ENCODE measurements at regions of chr6 and their contacts with region 1.

Region 1: DNA sequence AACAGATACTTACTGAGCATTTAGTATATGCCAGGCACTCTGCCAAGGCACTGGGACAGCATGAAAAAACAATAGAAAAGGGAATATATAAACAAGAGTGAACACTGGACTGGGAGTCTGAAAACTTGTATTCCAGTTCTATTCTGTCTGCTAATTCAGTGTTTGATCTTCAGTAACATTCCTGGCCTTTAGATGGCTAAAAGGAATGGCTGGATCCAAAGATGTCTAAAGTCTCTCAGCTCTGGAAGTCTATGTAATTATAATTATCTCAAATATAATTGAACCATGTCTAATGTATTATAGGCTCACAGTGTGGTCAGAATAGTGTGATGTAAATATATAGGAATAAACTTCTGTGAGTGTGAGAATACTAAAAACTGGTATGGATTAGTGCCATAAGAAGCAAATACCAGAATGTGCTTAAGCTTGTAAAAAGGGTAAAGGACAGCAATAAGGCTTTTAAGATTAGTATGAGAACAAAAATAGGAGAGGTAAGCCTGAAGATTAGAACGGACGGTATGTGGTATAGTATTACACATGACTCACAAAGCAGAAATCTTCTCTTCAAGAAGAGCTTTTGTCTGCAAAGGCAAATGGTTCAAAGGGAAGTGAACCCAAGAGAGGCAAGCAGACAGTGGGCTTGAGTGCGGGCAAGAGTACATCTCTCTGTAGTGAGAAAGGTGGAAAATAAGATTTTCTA is 68.5 kb downstream of the TMEM200A start:
- DNase-seq: no peak
- ATAC-seq: no peak
- H3K4me3 ChIP-seq: no peak overlapping the region
- H3K27ac ChIP-seq: no peak overlapping the region
- H3K4me1 ChIP-seq: no peaks in the 10 kb centered on the region
- H3K27me3 ChIP-seq: no peaks in the 10 kb centered on the region
- CTCF ChIP-seq: no peak
- EP300 ChIP-seq: no peak
- POLR2A ChIP-seq: no peak
- RAD21 ChIP-seq: no peak

Region 2: DNA sequence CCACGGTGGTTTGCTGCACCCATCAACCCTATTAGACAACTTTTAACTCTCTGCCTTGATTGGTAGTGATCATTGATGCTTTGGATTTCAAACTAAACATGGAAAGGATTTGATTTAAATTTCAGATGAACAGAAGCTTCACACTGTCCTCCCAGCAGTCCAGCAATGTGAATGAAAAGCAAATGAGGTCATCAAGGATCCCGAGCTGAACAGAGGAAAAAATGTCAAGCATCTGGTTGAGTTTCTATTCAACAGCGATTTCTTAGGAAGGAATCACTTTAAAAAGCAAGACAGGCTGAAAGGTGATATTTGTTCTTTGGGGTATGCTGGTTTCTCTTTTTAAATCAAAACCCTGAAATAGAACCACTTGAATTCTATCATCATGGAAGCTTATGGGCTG is 201.0 kb before region 1 on chr6:
- CTCF ChIA-PET with region 1: no interaction called
- POLR2A ChIA-PET with region 1: no interaction called
- in situ Hi-C with region 1: no loop called
- intact Hi-C with region 1: loop called (anchors 10 kb)
- DNase-seq: no peak
- ATAC-seq: no peak
- H3K4me3 ChIP-seq: no peak overlapping the region
- H3K27ac ChIP-seq: no peak overlapping the region
- H3K4me1 ChIP-seq: no peaks in the 10 kb centered on the region
- H3K27me3 ChIP-seq: peaks cover 0 to 2% of the 10 kb centered on the region in 2 experiments; a peak in 2 of 5 replicates
- CTCF ChIP-seq: no peak
- EP300 ChIP-seq: no peak
- POLR2A ChIP-seq: no peak
- RAD21 ChIP-seq: no peak

Region 3: GRCh38 chr6:130396722-130397121 is 37.6 kb before region 1 on chr6:
- CTCF ChIA-PET with region 1: no interaction called
- POLR2A ChIA-PET with region 1: no interaction called
- in situ Hi-C with region 1: no loop called
- intact Hi-C with region 1: no loop called
- DNase-seq: no peak
- ATAC-seq: no peak
- H3K4me3 ChIP-seq: no peak overlapping the region
- H3K27ac ChIP-seq: no peak overlapping the region
- H3K4me1 ChIP-seq: no peaks in the 10 kb centered on the region
- H3K27me3 ChIP-seq: no peaks in the 10 kb centered on the region
- CTCF ChIP-seq: no peak
- EP300 ChIP-seq: no peak
- POLR2A ChIP-seq: no peak
- RAD21 ChIP-seq: no peak

Measured in HepG2 (cell line).